ENCODE measurements at regions of chr1 and their contacts with region 1.

Region 1: DNA sequence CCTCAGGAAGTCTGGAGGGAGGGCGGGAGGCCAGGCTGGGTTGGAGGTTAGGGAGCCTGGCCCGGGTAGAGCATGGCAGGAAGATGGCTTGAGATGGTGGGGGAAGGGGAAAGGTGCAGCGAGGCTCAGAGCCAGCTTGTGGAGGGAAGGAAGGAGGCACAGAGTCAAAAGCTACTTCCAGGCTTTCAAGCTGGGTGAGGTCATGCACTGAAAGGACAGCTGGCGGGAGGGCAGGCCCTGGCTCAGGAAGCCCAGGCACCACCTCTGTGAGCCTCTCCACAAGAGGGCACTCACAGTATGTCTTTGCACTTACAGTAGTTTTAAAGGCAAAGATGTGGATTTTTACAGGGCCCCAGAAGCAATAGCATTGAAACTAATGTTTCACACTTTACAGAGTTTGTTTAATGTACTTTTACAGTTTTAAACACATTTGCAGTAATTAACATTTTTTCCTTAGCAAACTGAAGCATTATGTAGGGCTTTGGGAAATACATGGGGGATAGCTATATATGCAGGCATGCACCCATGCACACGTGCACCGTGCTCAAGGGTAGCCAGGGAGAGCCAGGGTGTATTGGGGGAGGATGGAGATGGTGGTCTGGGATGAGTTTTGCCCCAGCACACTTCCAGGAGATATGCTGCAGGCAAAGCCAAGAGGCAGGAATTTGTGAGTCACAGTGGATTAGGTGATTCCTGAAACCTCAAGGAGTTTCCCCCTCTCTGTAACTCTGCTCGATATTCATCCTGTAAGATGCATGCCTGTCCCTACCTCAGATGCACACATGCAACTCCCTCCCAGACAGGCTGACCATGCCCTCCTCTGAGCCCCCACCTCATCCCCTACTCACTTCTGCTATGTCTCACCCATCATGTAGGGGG is 6.1 kb upstream of the ADAM15 start:
- DNase-seq: no peak
- H3K4me3 ChIP-seq: no peak overlapping the region
- H3K27me3 ChIP-seq: no peaks in the 10 kb centered on the region; the same call in 1 of the 2 replicates
- CTCF ChIP-seq: peak; percentile 83

Region 2: DNA sequence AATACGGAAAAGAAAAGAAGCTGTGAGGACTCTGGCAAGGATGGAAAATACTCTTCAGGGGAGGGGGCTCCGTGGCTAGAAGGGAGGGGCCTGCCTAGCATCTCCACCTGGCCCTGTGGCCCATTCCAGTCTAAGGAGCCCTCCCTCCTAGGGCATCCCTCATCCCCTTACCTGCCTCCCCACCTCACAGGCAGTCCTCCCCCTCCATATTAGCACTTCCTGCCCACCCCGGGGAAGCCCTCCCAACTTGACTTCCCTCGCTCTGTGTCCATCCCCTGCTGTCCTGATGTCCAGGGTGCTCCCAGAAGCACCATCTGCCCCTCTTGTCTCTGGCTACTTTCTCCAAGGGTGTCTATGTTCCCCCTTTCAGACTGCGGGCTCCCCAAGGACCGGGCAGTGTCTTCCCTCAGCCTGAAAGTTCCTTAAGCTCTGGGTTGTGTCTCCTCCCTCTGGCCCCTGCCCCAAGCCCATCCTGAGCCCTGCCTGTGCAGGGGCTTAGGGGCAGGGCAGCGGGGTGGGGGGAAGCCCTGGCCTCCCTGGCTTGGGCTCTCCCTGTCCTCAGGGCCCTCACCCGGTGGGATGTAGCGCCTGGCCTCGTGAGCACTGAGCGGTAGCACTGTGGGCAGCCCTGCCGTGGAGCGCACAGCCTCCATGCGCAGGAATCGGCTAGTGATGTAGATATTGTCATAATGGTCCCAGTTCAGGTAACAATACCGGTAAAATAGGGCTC is 15.4 kb before region 1 on chr1:
- CTCF ChIA-PET with region 1: interaction called, 31 read pairs
- POLR2A ChIA-PET with region 1: interaction called, 3 read pairs
- DNase-seq: no peak
- H3K4me3 ChIP-seq: no peak overlapping the region
- H3K27me3 ChIP-seq: 0 out of 2 replicates have a peak, but pooled peaks cover 1% of the 10 kb centered on the region
- CTCF ChIP-seq: no peak

Measured in BJ (cell line).